Gastrocnemius medialis (tissue), 4 donors: ENCODE measurements at regions of chr11 and their contacts with region 1.

Region 1: GRCh38 chr11:130671801-130672700 is 223.6 kb downstream of the ADAMTS15 start:
- DNase-seq: peak; percentile 16 to 41
- ATAC-seq: peak; percentile 13 to 45
- H3K4me3 ChIP-seq: no peak overlapping the region
- H3K27ac ChIP-seq: peak overlapping the region; percentile 12 to 56 (median 27)
- H3K4me1 ChIP-seq: peaks cover 50 to 51% of the 10 kb centered on the region in 2 donors
- H3K27me3 ChIP-seq: no peaks in the 10 kb centered on the region
- CTCF ChIP-seq: no peak
- POLR2A ChIP-seq: no peak

Region 2: DNA sequence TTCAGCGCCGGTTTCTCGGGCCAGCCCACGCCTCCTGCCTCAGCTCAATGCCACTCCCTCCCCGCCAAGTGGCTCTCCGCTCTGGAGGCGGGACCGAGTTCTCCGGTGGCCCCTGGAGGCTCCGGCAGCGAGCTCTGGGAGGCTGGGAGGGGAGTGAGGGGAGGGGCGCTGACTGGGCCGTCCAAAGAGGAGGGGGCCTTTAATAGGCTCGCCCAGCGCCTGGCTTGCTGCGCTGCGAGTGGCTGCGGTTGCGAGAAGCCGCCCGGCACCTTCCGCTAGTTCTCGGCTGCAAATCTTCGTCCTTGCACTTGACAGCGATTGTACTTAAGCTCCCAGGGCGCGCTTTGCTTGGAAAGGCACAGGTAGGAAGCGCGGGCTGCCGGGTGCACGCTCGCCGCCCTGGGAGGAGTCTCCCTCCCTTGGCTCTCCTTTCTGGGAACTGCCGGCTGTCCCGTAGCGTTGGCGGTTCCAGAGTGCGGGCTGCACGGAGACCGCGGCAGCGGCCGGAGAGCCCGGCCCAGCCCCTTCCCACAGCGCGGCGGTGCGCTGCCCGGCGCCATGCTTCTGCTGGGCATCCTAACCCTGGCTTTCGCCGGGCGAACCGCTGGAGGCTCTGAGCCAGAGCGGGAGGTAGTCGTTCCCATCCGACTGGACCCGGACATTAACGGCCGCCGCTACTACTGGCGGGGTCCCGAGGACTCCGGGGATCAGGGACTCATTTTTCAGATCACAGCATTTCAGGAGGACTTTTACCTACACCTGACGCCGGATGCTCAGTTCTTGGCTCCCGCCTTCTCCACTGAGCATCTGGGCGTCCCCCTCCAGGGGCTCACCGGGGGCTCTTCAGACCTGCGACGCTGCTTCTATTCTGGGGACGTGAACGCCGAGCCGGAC is 223.4 kb before region 1 on chr11 and contains the start of gene ADAMTS15:
- in situ Hi-C with region 1: loop called in 2 of 4 experiments (anchors 10 to 25 kb)
- intact Hi-C with region 1: no loop called
- DNase-seq: peak; percentile 61 to 70
- ATAC-seq: peak; percentile 75 to 78
- H3K4me3 ChIP-seq: peak within 1 kb of the TSS; percentile 56 to 70 (median 66)
- H3K27ac ChIP-seq: peak within 1 kb of the TSS; percentile 65 to 77 (median 69)
- H3K4me1 ChIP-seq: peaks cover 5 to 19% of the 10 kb centered on the region in 2 donors
- H3K27me3 ChIP-seq: peaks cover 8 to 14% (median 8%) of the 10 kb centered on the region in 3 donors
- CTCF ChIP-seq: no peak
- POLR2A ChIP-seq: peak; percentile 29 to 56
- total RNA-seq, gene ADAMTS15: 1.2 to 3.4 (median 1.9) TPM

Region 3: DNA sequence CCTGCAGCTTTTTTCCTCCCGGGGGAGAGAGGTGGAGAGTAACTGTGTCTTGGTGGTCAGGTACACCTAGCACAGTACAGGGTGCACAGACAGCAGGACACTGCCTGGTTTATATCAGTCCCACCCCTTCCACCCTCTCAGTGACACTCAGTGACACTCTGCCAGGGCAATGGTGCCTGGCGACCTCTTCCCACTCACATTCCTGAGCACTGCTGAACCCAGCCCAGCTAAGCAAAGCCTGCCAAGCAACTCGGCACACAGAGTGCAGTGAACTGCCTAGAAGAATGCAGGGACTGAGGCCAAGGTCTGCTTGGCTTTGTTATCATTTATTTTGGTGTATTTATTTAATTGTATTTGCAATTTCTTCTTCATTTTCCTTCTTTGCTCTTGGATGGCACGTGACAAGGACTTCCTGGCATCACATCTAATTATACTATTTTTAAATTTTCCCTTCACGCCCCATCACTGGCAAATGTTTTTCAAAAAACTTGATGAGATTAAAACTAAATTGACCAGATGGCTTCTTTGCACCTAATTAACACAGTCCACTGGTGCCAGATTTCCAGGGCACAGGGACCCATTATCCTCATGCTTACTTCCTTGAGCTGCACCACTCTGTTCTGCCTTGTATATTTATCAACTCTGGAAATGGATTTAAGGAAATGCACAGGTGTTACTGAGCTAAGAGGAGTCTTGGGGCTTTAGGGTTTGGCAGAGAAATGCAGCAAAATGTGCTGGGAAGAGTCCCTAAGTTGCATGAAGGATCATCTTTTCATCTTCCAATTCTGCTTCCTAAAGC is 18.0 kb before region 1 on chr11:
- in situ Hi-C with region 1: no loop called
- intact Hi-C with region 1: loop called (anchors 2 kb)
- DNase-seq: peak; percentile 52 to 79
- ATAC-seq: peak; percentile 73 to 79
- H3K4me3 ChIP-seq: no peak overlapping the region
- H3K27ac ChIP-seq: peak overlapping the region; percentile 65 to 79 (median 74)
- H3K4me1 ChIP-seq: peaks cover 15 to 19% of the 10 kb centered on the region in 2 donors
- H3K27me3 ChIP-seq: no peaks in the 10 kb centered on the region
- CTCF ChIP-seq: no peak
- POLR2A ChIP-seq: no peak